ENCODE measurements at regions of chr6 and their contacts with region 1.

Region 1: GRCh38 chr6:149990618-149991471 is 27.1 kb downstream of the ULBP1 start:
- DNase-seq: no peak
- H3K4me3 Mint-ChIP-seq: peak overlapping the region; percentile 63
- H3K27ac Mint-ChIP-seq: peak overlapping the region; percentile 10
- H3K4me1 Mint-ChIP-seq: peaks cover 32% of the 10 kb centered on the region
- H3K27me3 Mint-ChIP-seq: peaks cover 93% of the 10 kb centered on the region

Region 2: DNA sequence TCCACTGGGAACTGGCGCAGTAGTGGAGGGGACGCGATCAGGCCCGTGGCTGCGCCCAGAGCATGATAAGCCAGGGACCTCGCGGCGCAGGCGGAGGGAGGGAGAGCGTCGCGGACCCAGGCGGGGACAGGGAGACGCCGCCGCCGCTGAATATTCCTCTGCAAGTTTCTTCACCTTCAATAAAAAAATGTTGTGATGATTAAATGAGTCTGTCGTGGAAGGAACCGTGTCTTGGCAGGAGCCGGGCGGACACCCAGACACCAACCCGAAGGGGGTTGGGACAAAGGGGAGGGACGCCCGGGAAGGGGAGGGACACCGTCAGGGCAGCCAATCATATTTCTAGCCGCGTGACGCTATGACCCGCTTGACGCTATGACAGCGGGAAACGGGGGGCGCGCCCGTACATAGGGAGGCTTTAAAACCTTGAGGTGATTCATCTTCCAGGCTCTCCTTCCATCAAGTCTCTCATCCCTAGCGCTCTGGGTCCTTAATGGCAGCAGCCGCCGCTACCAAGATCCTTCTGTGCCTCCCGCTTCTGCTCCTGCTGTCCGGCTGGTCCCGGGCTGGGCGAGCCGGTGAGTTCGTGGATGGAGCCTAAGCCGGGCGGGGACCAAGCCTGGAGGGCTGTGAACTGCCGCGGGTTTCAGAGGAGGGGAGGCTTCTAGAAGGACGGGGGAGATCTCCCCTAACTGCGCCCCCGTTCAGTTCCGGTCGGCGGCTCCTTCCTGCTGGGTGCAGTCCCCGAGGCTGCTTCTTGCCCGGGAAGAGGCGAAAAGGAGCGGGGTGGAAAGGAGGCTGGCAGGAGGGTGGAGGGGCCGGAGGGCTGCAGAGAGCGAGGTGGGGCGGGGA is 49.0 kb before region 1 on chr6 and contains the start of gene ULBP2:
- intact Hi-C with region 1: loop called (anchors 1 kb)
- DNase-seq: peak; percentile 81
- H3K4me3 Mint-ChIP-seq: peak within 1 kb of the TSS; percentile 90
- H3K27ac Mint-ChIP-seq: peak within 1 kb of the TSS; percentile 84
- H3K4me1 Mint-ChIP-seq: peaks cover 42% of the 10 kb centered on the region
- H3K27me3 Mint-ChIP-seq: peaks cover 76% of the 10 kb centered on the region
- total RNA-seq, gene ULBP2: 0.32 and 0.65 TPM in 2 replicates

Region 3: DNA sequence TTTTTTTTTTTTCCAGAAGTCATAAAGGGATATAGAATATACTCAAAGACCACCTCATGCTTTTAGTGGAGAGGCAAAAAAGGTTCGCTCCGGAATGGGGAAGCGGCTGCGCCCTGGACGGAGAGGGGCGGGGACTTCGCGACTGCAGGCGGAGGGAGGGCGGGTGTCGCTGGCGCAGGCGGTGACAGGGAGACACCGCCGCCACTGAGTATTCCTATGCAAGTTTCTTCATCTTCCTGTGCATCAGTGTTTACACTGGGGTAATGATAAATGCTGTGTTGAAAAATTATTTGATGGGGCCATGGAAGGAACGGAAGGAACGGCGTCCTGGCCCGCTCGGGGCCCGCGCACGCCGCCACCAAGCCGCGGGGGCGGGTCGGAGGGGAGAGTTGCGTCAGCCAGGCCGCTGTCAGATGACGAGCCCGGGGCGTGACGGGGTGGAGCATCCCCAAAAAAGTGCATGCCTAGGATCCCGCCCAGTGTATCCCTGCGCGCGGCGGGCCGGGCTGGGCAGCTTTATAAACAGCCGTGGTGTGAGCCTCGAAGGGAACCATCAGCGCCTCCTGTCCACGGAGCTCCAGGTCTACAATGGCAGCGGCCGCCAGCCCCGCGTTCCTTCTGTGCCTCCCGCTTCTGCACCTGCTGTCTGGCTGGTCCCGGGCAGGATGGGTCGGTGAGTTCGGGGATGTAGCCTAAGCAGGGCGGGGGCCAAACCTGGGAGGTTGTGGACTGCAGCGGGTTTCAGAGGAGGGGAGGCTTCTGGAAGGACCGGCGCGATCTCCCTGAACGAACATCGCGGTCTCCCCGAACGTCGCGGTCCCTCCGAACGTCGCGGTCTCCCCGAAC is 27.2 kb before region 1 on chr6 and contains the start of gene ULBP1:
- intact Hi-C with region 1: loop called (anchors 2 kb)
- DNase-seq: peak; percentile 80
- H3K4me3 Mint-ChIP-seq: peak within 1 kb of the TSS; percentile 91
- H3K27ac Mint-ChIP-seq: peak within 1 kb of the TSS; percentile 90
- H3K4me1 Mint-ChIP-seq: peaks cover 33% of the 10 kb centered on the region
- H3K27me3 Mint-ChIP-seq: peaks cover 75% of the 10 kb centered on the region
- total RNA-seq, gene ULBP1: 0.91 and 0.99 TPM in 2 replicates

Region 4: DNA sequence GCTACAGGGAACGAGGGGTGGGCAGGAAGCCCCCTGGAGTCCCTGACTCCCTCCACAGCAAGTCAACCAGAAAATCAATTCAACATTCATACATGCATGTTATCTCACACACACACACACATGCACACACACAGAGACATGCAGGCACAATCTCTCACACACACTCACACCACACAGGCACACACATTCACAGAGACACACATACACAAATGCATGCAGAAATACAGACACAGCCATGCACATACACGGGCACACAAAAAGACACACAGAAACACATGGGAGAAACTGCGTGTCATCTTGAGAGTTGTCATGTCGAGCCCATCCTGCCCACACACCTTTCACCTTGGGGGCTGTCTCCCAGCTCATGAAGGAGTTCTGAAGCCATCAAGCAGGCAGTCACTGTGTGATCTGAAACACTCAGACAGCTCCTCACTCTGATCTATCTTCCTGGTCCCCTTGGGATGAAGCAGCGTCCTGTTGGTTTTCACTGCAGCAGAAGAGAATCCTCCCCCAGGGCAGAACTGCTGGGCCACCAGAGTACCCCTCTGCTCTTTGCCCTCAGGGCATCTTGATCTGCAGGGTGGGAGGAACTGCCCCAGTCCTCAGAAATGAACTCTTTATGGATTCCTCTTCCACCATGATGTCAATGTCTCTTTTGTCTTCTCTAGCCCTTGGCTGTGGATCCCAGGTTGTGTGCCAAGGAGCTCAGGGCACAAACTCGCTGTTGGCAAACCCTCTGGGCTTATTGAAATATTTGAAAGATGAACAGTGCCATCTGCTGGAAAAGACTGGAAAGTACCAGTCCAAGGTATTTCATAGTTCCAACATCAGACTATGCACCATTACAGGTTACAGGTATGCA is 25.7 kb after region 1 on chr6:
- intact Hi-C with region 1: loop called (anchors 2 kb)
- DNase-seq: peak; percentile 44
- H3K4me3 Mint-ChIP-seq: no peak overlapping the region
- H3K27ac Mint-ChIP-seq: no peak overlapping the region
- H3K4me1 Mint-ChIP-seq: peaks cover 21% of the 10 kb centered on the region
- H3K27me3 Mint-ChIP-seq: peaks cover 70% of the 10 kb centered on the region

Region 5: DNA sequence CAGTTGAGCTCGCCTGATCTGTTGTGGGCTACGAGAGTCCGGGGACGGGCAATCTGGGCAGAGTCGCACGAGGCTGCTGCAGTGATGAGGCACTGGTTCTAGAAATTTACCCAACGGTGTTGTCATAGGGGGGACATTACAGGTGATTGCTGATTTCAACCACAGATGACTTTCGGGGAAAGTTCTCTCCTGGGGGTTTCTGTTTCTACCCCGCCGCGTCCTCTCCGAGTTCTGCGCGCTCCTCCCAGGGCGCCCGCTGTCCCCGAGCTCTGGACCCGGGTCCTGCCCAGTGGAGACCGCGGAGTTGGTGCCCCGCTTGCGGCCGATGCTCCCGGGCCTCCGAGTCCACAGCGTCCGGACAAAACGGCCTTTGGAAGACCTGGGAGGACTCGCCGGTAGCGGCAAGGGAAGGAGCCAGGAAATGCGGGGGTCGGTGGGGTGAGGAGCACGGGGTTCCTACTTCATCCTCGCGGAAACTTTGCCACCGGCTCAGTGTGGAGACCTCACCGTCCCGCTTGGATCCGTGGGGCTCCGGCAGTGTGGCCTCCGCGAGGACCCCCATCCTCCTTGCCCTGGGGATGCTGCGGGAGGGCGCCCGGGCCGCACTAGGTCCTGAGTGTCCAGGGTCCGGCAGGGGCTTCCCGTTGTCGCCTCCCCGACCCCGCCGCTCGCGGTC is 46.8 kb after region 1 on chr6:
- intact Hi-C with region 1: no loop called
- DNase-seq: no peak
- H3K4me3 Mint-ChIP-seq: no peak overlapping the region
- H3K27ac Mint-ChIP-seq: no peak overlapping the region
- H3K4me1 Mint-ChIP-seq: peaks cover 5% of the 10 kb centered on the region
- H3K27me3 Mint-ChIP-seq: peaks cover 83% of the 10 kb centered on the region